Activated CD8-positive, alpha-beta T cell treated with anti-CD3 and anti-CD28 coated beads for 36 hours (primary cell): ENCODE measurements at regions of chr17 and their contacts with region 1.

Region 1: DNA sequence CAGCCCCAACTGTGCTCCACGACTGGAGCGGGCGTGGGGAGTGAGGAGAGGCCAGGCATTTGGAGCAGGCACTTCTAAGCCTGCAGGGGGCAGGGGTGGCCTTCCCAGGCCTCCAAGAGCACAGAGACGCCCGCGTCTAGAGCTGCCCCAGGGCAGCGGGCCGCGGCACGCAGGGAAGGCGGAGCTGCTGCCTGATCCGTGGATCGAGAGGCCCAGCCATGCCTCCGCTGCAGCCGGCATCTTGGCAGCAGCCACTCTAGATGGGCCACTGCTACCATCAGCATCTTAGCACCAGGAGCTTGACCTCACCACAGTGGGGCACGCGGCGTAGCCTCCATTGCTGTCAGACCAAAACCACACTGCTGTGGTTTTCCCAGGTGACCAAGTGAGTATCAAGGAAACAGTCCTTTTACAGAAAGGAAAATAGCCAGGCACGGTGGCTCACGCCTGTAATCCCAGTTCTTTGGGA is 20.4 kb upstream of the WDR45B start:
- DNase-seq: peak; percentile 71
- ATAC-seq: peak; percentile 98
- H3K4me3 Mint-ChIP-seq: peak overlapping the region; percentile 47
- H3K27ac Mint-ChIP-seq: no peak overlapping the region
- H3K4me1 Mint-ChIP-seq: peaks cover 4% of the 10 kb centered on the region
- H3K27me3 Mint-ChIP-seq: no peaks in the 10 kb centered on the region
- CTCF ChIP-seq: peak; percentile 52

Region 2: DNA sequence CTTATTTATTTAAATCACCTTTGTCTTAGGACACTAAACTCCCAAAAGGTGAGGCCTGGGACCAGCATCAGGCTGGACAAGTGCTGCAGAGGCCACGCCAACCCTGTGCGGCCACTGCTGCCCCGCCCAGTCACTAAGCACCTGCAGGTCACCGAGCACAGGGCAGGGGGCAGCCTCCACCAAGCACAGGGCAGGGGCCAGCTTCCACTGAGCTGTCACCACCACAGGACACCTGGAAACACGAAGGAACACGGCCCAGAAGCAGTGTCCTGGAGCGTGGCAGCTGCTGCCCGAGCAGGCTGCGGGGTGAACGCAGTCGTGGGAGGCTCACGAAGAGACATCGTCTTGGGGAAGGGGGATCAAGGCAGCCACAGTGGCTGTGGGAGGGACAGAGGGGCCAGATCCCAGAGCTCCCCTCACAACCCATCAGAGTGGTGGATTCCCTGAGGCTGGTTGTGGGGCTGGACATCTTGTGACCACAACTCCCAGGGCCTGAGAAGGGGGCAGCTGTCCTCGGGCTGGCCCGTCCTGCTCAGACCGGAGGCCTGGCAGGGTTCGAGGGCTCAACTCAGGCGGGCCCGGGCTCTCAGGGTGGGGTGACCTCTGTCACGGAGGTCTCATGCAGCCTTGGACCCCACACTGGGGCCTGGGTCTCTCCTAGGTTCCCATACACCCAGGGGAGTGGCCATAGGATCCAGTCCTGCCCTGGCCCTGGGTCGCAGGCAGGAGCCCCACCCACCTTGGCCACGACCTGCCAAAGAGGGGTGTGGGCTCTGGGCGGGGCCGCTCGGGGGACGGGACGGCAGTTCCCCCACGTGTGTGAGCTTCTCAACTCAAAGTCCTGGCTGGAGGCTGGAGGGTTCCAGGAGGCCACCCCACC is 11.2 kb after region 1 on chr17:
- CTCF ChIA-PET with region 1: interaction called, 18 read pairs
- POLR2A ChIA-PET with region 1: interaction called, 3 read pairs
- intact Hi-C with region 1: no loop called
- DNase-seq: no peak
- ATAC-seq: no peak
- H3K4me3 Mint-ChIP-seq: no peak overlapping the region
- H3K27ac Mint-ChIP-seq: no peak overlapping the region
- H3K4me1 Mint-ChIP-seq: no peaks in the 10 kb centered on the region
- H3K27me3 Mint-ChIP-seq: no peaks in the 10 kb centered on the region
- CTCF ChIP-seq: no peak

Region 3: DNA sequence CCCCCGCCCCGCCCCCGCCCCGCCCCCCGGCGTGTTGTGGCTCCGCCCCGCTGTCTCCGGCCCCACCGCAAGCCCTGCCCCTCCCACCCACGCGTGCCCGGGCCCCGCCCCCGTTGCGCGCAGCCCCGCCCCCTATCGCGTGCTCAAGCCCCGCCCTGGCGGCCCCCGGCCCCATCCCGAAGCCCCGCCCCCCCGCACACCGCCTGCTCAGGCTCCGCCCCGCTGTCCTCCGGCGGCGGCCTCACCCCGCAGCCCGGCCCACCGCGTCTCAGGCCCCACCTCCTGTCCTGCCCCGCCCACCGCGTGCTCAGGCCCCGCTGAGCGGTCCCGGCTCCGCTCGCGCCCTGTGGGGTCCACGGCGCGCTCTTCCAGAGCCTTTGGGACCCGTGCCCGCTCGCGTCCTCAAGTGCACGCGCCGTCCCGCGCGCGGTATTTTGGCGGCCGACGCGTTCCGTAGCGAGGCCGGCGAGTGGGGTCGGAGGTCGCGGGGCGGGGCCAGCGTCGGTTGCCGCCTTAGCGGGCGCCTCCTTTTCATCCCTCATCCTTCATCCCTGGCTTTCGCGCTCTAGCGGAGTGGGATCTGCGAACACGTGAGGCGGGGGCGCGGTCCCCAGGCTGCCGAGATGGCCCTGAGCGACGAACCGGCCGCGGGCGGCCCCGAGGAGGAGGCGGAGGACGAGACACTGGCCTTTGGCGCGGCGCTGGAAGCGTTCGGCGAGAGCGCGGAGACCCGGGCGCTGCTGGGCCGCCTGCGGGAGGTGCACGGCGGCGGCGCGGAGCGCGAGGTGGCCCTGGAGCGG is 83.1 kb after region 1 on chr17 and contains the start of gene TBCD:
- CTCF ChIA-PET with region 1: interaction called, 5 read pairs
- POLR2A ChIA-PET with region 1: interaction called, 3 read pairs
- intact Hi-C with region 1: loop called (anchors 10 kb)
- DNase-seq: peak; percentile 89
- ATAC-seq: peak; percentile 91
- H3K4me3 Mint-ChIP-seq: peak within 1 kb of the TSS; percentile 86
- H3K27ac Mint-ChIP-seq: peak within 1 kb of the TSS; percentile 61
- H3K4me1 Mint-ChIP-seq: peaks cover 23% of the 10 kb centered on the region
- H3K27me3 Mint-ChIP-seq: no peaks in the 10 kb centered on the region
- CTCF ChIP-seq: no peak
- total RNA-seq, gene TBCD: 77.8 to 85.8 TPM

Region 4: DNA sequence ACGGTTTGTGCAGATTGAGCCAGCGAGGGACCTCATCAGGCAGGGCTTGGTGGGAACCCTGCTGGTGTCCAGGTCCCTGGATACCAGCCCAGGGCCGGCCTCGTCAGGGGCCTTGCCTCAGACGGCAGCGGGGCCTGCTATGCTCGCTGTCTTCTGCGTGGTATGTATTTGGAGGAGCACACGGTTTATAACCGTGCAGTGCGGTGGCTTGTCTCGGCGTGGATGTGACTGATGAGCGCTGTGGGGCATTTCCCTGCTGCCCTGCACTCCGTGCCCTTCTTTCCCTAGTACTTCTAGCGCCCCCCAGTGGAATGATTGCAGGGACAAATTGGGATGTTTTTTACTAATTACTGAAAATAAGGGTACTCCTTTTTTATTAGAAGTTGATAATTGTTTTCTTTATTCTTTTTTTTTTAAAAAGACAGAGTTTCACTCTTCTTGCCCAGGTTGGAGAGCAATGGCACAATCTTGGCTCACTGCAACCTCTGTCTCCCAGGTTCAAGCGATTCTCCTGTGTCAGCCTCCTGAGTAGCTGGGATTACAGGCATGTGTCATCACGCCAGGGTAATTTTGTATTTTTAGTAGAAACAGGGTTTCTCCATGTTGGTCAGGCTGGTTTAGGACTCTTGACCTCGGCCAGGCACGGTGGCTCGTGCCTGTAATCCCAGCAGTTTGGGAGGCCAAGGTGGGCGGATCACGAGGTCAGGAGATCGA is 98.5 kb after region 1 on chr17:
- CTCF ChIA-PET with region 1: interaction called, 16 read pairs
- POLR2A ChIA-PET with region 1: no interaction called
- intact Hi-C with region 1: no loop called
- DNase-seq: peak; percentile 72
- ATAC-seq: no peak
- H3K4me3 Mint-ChIP-seq: no peak overlapping the region
- H3K27ac Mint-ChIP-seq: no peak overlapping the region
- H3K4me1 Mint-ChIP-seq: peaks cover 10% of the 10 kb centered on the region
- H3K27me3 Mint-ChIP-seq: no peaks in the 10 kb centered on the region
- CTCF ChIP-seq: peak; percentile 73

Region 5: GRCh38 chr17:82775001-82775823 is 106.5 kb after region 1 on chr17:
- CTCF ChIA-PET with region 1: interaction called, 26 read pairs
- POLR2A ChIA-PET with region 1: interaction called, 3 read pairs
- intact Hi-C with region 1: no loop called
- DNase-seq: peak; percentile 53
- ATAC-seq: peak; percentile 61
- H3K4me3 Mint-ChIP-seq: no peak overlapping the region
- H3K27ac Mint-ChIP-seq: no peak overlapping the region
- H3K4me1 Mint-ChIP-seq: peaks cover 21% of the 10 kb centered on the region
- H3K27me3 Mint-ChIP-seq: no peaks in the 10 kb centered on the region
- CTCF ChIP-seq: peak; percentile 94